Sciatic nerve (tissue), 2 donors: ENCODE measurements at regions of chr6 and their contacts with region 1.

Region 1: DNA sequence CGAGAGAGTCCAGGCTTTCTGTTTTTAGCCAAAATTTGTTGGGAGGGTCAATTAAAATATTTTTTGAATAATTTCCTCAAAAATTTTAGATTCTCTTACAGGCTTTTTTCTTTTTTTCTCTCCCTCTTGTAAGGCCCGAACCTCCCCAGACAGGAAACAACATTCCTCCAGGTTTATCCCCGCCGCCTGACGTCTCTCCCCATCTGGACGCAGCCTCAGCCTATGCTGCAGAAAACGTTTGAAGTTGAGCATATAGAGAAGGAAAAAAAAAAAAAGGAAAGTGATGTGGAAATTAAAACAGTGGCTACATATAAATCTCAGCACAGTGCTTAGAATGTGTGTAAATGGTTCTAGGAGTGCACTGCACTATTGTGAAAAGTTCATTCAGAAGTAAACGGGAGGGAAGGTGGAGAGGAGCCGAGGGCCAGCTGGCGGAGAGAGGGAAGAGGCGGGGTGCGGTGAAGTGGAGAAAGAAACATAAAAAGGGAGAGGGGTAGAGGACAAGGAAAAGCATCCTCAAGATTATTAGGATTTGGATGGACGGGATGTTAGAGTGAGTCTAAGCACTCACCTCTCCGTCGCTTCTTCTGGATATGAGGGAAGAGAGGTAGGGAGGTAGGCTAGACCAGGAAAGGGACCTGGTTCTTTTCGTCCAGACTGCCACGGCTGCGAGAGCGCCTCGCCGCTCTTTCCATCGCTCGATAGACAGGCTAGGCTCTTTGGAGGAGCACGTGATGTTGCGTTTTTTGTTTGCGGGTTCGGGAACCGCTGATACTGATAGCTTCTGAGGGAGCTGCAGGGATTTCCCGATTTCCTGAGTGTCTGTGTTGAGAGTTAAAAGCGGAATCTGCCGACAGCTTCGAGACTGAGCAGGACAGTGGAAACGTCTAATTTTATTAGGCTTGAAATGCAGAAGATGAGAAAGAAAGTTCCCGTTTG is 98.7 kb downstream of the TRIM27 start:
- DNase-seq: no peak
- ATAC-seq: no peak

Region 2: DNA sequence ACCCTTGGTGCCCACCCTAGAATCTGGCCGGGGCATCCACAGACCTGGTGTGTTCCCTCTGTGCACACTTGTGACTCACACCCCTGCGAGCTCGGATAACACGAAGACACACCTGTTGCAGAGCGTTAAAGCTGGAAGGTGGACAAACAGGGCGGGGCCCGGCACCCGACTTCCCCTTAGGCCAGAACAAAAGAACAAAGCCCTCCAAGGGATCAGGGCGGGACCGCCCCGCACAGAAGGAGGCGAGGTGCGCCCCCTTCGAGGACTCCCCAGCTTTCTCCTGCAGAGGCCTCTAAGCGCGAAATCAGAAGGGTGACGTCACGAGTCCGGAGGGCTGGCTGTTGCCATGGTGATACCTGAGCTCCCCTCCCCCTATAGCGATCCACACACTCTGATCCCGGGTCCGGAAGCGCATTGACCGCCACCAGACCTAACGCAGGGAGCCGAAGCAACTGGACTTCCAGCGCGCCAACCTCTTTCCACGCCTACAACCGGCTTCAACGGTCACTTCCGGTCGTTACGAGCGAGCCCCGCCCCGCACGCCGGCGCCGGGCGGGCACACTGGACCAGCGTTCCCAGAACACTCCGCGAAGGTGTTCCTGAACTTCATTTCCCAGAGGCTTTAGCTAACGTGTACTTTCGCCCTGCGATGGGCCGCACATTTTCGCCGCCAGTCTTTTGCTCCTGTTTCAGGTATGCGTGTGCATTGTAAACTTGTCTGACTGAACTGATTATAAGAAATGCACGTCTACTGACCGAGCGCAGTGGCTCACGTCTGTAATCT is 1352.3 kb before region 1 on chr6 and contains the start of gene ZNF184:
- intact Hi-C with region 1: no loop called
- DNase-seq: peak; percentile 96
- ATAC-seq: peak; percentile 99
- total RNA-seq, gene ZNF184: 10.6 TPM

Region 3: DNA sequence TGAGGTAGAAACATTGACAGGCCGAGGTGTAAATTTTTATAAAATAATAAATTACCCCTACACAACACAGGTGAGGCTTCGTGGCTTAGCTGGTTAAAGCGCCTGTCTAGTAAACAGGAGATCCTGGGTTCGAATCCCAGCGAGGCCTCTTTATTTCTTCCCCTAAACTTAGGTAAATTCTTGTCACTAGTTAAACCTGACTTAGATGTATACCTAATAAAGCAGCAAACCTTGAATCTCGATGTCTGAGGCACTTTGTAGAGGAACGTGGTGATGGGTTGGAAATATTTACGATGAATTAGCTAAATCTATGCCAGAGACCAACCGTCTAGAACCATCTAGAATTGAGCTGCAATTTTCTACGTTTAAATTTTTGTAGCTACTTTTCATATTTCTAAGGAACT is 1098.4 kb before region 1 on chr6:
- intact Hi-C with region 1: loop called (anchors 5 kb)
- DNase-seq: no peak
- ATAC-seq: no peak

Region 4: GRCh38 chr6:28673800-28674671 is 151.0 kb before region 1 on chr6:
- intact Hi-C with region 1: no loop called
- DNase-seq: no peak
- ATAC-seq: no peak